BJ (cell line): ENCODE measurements at regions of chr1 and their contacts with region 1.

Region 1: DNA sequence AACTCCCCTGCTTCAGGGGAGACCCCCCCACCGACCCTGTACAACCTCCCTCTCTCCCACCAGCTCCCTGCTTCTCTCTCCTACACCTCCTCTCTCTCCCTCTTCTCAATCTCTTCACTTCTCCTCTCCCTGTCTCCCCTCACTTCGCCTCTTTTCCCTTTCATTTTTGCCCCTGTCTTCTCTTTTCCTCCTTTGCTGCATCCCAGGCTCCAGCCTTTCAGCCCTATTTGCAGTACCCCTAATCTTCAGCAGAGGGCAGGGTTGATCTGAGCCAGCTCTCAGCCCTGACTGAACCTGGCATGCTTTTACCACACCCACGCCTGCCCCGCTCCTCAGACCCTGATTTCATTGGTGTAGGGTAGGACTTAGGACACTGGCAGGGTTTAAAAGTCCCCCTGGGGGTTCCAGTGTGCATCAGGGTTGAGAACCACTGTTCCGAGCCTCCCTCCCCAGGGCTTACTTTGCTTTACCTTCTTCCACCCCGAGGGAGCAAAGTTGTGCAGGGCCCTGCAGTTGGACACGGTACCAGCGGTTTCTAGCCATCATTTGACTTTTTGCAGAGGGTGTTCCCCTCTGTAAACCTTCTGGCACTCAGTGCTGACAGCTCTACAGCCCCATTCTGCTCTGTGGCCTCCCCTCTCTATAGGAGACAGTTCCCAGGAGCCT is 67.3 kb upstream of the CNTN2 start:
- DNase-seq: no peak
- H3K4me3 ChIP-seq: no peak overlapping the region
- H3K27me3 ChIP-seq: no peaks in the 10 kb centered on the region
- CTCF ChIP-seq: peak; percentile 87

Region 2: DNA sequence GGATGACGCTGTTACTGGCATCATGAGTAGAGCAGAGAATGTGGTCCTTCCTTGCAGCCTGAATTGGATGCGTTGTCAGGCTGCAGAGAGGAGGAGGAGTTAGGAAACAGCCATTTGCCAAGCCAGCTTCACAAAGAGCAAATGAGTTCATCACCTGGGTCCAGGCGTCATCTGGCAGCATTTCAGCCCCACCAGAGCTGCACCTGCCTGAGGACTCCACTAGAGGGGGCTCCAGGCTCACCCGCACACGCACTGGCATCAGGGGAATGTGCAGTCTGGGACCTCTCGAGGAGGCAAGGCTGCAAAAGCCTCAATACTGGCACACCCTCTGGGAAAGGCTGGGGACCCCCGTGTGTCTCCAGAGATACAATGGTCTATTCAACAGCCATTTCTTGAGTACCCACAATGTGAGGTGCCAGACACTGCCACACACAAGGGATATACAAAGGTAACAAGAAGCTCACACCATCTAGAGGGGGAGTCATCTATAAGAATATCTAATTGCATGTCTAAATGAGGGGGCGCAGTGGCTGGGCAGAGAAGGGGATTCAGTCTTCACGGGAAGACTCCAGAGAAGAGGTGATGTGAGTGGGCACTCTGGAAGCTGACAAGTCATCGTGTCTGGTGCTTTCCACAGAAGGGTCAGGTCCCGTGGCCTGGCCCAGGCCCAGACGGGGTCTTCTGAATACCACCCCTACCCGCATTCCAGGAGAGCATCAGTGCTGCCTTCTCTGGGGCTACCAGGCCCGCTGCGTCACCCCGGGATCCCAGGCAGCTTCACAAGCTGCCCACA is 13.8 kb after region 1 on chr1:
- CTCF ChIA-PET with region 1: interaction called, 53 read pairs
- POLR2A ChIA-PET with region 1: no interaction called
- DNase-seq: peak; percentile 16
- H3K4me3 ChIP-seq: no peak overlapping the region
- H3K27me3 ChIP-seq: no peaks in the 10 kb centered on the region
- CTCF ChIP-seq: peak; percentile 99

Region 3: GRCh38 chr1:205183676-205184335 is 208.1 kb after region 1 on chr1:
- CTCF ChIA-PET with region 1: no interaction called
- POLR2A ChIA-PET with region 1: no interaction called
- DNase-seq: no peak
- H3K4me3 ChIP-seq: no peak overlapping the region
- H3K27me3 ChIP-seq: no peaks in the 10 kb centered on the region
- CTCF ChIP-seq: no peak